ENCODE measurements at regions of chr20 and their contacts with region 1.

Region 1: DNA sequence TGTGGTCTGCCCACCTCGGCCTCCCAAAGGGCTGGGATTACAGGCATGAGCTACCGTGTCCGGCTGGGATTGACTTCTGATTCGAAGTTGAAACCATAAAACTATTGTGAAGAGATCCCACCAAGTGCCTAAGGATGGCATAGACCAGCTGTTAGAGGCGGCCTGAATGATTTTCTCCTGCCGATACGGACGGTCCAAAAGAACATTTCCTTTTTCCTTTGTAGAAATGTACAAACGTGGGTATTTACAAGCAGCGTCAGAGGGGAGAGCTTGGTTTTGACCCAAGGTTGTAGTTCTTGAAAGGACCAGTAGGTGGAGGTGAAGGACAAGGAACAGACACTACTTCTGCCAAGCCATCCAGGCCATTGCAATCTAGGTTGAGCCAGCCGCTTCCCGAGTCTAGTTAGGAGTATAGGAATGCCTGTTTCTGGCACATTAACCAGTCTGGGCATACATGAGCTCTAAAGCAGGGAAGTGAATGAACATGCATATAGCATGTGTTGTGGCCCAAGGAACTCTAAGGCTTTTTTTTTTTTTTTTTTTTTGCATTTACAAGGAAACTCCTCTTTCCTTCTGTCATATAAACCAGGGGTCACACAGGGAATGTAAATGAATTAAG is 29.1 kb downstream of the MOCS3 start:
- DNase-seq: peak; percentile 71 to 93
- H3K4me3 ChIP-seq: no peak overlapping the region
- H3K27ac ChIP-seq: no peak overlapping the region
- H3K4me1 ChIP-seq: peaks cover 0 to 6% (median 0%) of the 10 kb centered on the region in 4 donors
- H3K27me3 ChIP-seq: peaks cover 0 to 50% (median 0%) of the 10 kb centered on the region in 3 donors
- CTCF ChIP-seq: peak in 5 of 7 experiments; percentile 87 to 94 (median 90)
- EP300 ChIP-seq: no peak
- POLR2A ChIP-seq: no peak

Region 2: GRCh38 chr20:50772420-50773185 is 215.1 kb before region 1 on chr20:
- intact Hi-C with region 1: no loop called
- DNase-seq: no peak
- H3K4me3 ChIP-seq: no peak overlapping the region
- H3K27ac ChIP-seq: no peak overlapping the region
- H3K4me1 ChIP-seq: no peaks in the 10 kb centered on the region
- H3K27me3 ChIP-seq: peaks cover 0 to 6% (median 0%) of the 10 kb centered on the region in 3 donors
- CTCF ChIP-seq: no peak
- EP300 ChIP-seq: no peak
- POLR2A ChIP-seq: no peak

Region 3: DNA sequence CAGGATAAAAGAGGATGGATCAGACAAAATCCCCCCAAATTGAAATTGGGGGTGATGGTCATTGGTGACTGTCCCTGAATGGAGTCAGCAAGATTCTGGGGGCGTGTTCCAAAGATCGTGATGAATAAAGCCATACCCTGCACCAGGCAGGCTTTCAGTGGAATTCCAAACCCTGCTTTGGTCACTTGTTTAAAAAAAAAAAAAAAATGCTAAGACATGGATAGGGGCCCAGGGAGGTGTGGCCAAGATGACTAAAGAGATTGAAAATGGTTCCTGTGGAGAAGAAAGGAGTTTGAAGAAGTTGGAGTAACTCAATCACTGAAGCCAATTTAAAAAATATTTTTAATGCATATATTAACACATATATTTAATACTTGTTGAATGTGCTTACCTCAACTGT is 196.6 kb after region 1 on chr20:
- intact Hi-C with region 1: no loop called
- DNase-seq: no peak
- H3K4me3 ChIP-seq: no peak overlapping the region
- H3K27ac ChIP-seq: no peak overlapping the region
- H3K4me1 ChIP-seq: peaks cover 0 to 6% (median 0%) of the 10 kb centered on the region in 4 donors
- H3K27me3 ChIP-seq: peaks cover 0 to 30% (median 6%) of the 10 kb centered on the region in 3 donors
- CTCF ChIP-seq: no peak
- EP300 ChIP-seq: no peak
- POLR2A ChIP-seq: no peak

Region 4: GRCh38 chr20:51306503-51307358 is 319.0 kb after region 1 on chr20:
- intact Hi-C with region 1: loop called (anchors 5 kb)
- DNase-seq: peak; percentile 80 to 91
- H3K4me3 ChIP-seq: no peak overlapping the region
- H3K27ac ChIP-seq: no peak overlapping the region
- H3K4me1 ChIP-seq: peaks cover 0 to 7% (median 7%) of the 10 kb centered on the region in 4 donors
- H3K27me3 ChIP-seq: peaks cover 0 to 16% (median 0%) of the 10 kb centered on the region in 3 donors
- CTCF ChIP-seq: peak in 5 of 7 experiments; percentile 75 to 92 (median 86)
- EP300 ChIP-seq: no peak
- POLR2A ChIP-seq: no peak

Measured in stomach (tissue), 19 donors.